ENCODE measurements at regions of chr17 and their contacts with region 1.

Region 1: GRCh38 chr17:38333635-38334295 is 10.0 kb downstream of the GPR179 start:
- DNase-seq: peak; percentile 64
- H3K4me3 Mint-ChIP-seq: no peak overlapping the region
- H3K27ac Mint-ChIP-seq: no peak overlapping the region
- H3K4me1 Mint-ChIP-seq: no peaks in the 10 kb centered on the region
- H3K27me3 Mint-ChIP-seq: peaks cover 2% of the 10 kb centered on the region

Region 2: DNA sequence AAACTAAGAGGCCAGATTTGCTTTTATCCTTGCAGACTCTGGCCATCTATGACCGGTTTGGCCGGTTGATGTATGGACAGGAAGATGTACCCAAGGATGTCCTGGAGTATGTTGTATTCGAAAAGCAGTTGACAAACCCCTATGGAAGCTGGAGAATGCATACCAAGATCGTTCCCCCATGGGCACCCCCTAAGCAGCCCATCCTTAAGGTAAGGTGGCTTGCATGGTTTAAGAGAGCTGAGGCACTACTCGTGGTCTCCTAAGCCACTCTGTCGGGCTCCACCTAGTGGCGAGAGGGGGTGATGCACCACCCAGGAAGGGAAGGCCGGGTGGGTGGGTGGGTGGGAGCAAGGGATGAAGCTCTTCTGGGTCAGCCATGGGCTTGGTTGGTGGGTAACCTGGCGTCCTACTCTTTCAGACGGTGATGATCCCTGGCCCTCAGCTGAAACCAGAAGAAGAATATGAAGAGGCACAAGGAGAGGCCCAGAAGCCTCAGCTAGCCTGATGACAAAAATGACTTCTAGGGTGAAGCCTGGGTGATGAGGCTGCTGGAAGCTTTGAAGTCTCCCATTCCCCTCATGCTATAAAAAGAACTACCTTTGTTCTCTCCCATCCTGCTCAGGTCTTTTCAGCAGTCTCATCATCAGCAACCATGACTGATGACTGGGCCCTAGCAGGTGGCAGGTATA is 11.5 kb before region 1 on chr17:
- CTCF ChIA-PET with region 1: interaction called, 19 read pairs
- POLR2A ChIA-PET with region 1: interaction called, 4 read pairs
- DNase-seq: peak; percentile 74
- H3K4me3 Mint-ChIP-seq: no peak overlapping the region
- H3K27ac Mint-ChIP-seq: no peak overlapping the region
- H3K4me1 Mint-ChIP-seq: peaks cover 7% of the 10 kb centered on the region
- H3K27me3 Mint-ChIP-seq: no peaks in the 10 kb centered on the region

Region 3: GRCh38 chr17:38415250-38416194 is 81.8 kb after region 1 on chr17:
- CTCF ChIA-PET with region 1: interaction called, 11 read pairs
- POLR2A ChIA-PET with region 1: no interaction called
- DNase-seq: peak; percentile 26
- H3K4me3 Mint-ChIP-seq: peak overlapping the region; percentile 55
- H3K27ac Mint-ChIP-seq: peak overlapping the region; percentile 31
- H3K4me1 Mint-ChIP-seq: peaks cover 12% of the 10 kb centered on the region
- H3K27me3 Mint-ChIP-seq: peaks cover 33% of the 10 kb centered on the region